GM10248 (cell line): ENCODE measurements at regions of chr7 and their contacts with region 1.

Region 1: GRCh38 chr7:142782922-142783900 is 12.4 kb downstream of the PRSS2 start:
- DNase-seq: peak; percentile 84
- CTCF ChIP-seq: peak; percentile 96

Region 2: DNA sequence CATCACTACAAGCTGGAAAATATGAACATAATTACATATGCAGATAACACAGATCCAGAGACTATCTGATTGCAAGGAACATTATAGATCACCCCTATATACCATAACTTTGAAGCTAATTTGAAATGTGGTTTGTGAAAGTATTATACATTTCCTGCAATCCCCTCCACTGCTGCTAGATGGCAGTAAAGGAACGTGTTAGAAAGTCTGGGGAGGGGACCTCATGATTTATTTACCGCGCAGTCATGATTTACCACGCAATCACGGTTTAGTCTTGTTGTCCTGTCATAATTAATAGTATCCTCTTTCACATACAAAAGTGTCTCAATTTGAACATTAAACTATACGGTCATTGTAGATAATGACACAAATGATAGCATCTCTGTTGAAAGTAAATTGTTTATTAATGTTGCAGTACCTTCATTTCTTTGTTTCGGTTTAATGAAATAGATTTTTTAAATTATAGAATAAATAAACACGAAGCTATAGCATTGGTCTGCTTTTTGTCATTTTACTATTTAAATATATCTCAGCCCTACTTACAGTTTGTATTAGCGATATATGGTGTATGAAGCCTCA is 179.3 kb before region 1 on chr7:
- CTCF ChIA-PET with region 1: interaction called, 10 read pairs
- POLR2A ChIA-PET with region 1: no interaction called
- DNase-seq: peak; percentile 62
- CTCF ChIP-seq: peak; percentile 81

Region 3: DNA sequence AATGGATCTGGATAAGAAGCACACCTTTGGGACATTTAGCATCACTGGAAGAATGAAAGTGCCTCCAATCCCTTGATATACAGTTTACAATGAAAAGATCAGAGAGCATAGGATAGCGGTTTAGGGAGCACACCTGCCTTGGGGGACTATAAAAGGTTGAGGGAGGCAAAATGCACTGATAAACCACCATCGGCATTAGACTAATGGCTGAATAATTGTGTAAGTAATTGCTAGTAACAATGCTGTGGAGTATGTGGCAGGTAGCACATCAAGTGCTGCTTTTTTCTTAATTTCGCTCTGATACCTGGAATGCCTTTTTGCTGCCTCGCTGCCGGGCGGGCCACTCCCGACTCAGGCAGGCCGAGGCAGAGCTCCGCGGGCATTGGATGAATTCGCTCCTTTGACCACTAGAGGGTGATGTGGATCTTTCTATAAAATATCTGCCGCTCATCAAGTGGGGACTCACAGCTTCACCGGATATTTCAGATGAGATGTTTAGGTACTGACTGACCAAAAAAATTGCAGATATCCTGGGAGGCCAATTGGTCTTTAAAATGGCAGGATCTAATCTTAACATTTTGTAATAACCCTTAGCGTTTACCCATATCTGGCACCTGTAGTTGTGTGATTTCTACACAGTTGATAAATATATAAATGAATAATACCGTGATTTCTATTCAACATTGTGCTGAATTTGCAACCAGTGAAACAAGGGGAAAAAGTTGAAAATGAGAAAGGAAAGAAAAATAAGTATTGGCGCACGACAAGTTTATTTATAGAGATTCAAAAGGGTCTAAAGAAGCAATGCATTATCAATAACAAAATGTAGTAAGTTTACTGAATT is 150.7 kb before region 1 on chr7:
- CTCF ChIA-PET with region 1: interaction called, 214 read pairs
- POLR2A ChIA-PET with region 1: no interaction called
- DNase-seq: peak; percentile 79
- CTCF ChIP-seq: peak; percentile 79

Region 4: GRCh38 chr7:142711746-142712619 is 71.2 kb before region 1 on chr7:
- CTCF ChIA-PET with region 1: interaction called, 42 read pairs
- POLR2A ChIA-PET with region 1: no interaction called
- DNase-seq: no peak
- CTCF ChIP-seq: peak; percentile 53

Region 5: DNA sequence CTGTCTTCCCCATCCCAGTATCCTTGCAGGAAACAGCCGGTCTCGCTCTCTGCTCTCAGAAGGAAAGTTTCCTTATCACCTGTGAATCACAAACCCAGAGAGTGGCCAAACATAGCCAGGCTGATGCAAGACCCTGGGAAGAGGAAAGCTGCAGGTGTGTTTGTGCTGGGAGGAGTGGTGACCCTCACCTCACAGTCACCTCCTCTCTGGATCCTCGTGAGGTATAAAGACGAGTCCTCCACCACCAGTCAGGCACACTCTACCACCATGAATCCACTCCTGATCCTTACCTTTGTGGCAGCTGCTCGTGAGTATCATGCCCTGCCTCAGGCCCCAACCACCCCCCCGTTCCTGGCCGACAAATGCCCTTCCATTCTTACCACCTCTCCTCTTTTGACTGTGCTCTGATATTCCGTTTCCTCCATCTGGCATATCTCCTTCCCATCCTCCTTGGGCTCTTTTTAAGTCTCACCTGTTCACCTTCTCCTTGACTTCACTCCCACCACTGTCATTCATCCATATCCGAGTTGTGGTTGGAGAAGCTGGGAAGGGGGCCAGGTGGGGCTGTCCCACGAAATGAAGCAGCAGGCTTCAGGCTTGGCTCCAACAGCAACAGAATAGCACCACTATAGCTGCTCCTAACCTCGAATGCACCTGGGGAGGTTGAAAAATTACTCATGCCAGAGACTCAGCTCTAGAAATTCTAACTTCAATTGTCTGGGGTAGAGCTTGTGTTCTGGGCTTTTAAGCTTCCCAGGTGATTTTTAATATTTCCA is 33.8 kb before region 1 on chr7 and contains the start of gene PRSS1:
- CTCF ChIA-PET with region 1: interaction called, 10 read pairs
- POLR2A ChIA-PET with region 1: no interaction called
- DNase-seq: no peak
- CTCF ChIP-seq: no peak

Region 6: DNA sequence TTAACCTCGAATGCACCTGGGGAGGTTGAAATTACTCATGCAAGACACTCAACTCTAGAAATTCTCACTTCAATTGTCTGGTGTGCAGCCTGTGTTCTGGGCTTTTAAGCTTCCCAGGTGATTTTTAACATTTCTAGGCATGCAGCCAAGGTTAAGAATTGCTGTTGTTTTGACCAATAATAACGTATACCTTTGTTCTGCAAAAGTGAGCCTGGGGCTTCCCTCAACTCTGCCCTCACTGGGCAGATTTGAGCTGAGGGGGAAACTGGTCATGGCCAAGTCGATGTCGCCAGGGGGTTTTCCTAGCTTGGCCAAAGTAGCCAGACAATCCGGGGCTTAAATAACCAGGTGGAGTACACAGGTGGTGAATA is 11.9 kb before region 1 on chr7:
- CTCF ChIA-PET with region 1: interaction called, 99 read pairs
- POLR2A ChIA-PET with region 1: interaction called, 4 read pairs
- DNase-seq: no peak
- CTCF ChIP-seq: no peak

Region 7: DNA sequence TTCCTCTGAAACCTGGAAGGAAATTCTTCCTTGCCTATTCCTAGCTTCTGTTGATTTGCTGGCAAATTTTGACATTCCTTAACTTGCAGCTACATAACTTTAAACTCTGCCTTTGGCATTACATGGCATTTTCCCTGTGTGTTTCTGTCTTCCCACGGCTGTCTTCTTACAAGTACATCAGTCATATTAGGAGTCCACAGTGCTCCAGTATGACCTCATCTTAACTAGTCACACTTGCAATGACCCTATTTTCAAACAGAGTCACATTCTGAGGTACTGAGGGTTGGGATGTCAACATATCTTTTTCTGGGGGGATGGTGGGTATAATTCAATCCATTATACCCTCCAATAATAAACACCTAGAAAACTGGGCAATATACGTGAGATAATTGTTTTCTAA is 34.3 kb after region 1 on chr7:
- CTCF ChIA-PET with region 1: interaction called, 316 read pairs
- POLR2A ChIA-PET with region 1: no interaction called
- DNase-seq: no peak
- CTCF ChIP-seq: no peak